Activated CD4-positive, alpha-beta memory T cell treated with anti-CD3 and anti-CD28 coated beads for 36 hours (primary cell): ENCODE measurements at regions of chr13 and their contacts with region 1.

Region 1: DNA sequence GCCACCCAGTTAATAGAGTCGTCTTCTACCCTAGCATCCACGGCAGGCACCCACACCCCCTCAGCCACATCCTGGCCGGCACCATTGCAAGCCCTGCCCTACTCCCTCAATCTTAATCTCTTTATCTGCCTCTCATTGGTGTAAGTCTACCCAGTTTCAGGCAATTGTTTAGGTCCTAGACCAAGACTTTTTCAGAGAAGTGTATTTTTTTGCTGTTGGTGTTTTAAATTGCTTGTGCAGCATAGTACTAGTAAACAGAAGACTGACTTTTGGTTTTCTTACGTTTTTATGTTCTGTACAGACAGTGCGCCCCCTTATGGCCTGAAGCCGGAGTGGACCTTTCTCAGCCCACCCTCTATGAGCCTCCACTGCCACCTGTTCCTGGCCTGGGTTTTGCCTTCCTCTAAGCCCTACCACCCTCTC is 2.3 kb upstream of the LCP1 start:
- DNase-seq: peak; percentile 87
- H3K4me3 Mint-ChIP-seq: peak overlapping the region; percentile 97
- H3K27ac Mint-ChIP-seq: peak overlapping the region; percentile 96
- H3K4me1 Mint-ChIP-seq: peaks cover 35% of the 10 kb centered on the region
- H3K27me3 Mint-ChIP-seq: no peaks in the 10 kb centered on the region

Region 2: DNA sequence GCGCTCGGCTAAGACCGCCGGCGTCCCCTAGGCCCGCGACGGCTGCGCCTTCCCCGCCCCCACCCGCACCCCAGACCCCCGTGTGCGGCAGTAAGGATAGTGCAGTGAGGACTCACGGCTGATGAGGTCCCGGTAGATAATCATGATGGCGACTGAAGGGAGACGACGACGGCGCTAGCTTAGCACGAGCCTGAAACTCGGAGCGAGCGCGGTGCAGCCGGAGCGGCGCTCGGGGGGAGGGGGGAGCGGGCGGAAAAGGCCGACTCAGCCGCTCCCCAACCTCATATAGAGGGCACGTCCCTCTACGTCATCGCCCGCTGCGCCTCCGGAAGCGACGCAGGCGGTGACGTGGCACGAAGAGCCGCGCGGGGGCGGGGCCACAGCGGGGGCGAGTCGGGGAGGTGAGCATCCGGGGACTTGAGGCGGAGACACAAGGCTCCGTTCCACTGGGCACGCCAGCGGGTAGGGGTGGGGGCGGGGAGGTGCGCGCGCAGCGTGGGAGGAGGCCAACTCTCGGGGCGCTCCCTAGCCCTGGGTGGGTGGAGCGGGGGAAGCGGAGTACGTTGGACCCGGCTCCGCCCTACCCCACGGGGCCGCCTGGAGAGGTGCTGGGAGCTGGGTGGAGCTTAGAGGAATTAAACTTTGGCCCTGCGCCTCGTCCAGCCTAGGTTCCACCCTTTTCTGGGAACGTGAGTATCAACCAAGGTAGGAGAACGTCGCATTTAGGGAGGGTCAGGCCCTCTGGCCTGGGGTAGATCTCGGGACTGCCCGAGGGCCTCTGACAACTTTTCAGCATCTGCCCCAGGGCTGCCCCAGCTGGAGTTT is 843.1 kb before region 1 on chr13 and contains the start of gene TPT1:
- CTCF ChIA-PET with region 1: no interaction called
- POLR2A ChIA-PET with region 1: no interaction called
- intact Hi-C with region 1: loop called (anchors 5 kb)
- DNase-seq: peak; percentile 100
- H3K4me3 Mint-ChIP-seq: peak within 1 kb of the TSS; percentile 94
- H3K27ac Mint-ChIP-seq: peak within 1 kb of the TSS; percentile 99
- H3K4me1 Mint-ChIP-seq: peaks cover 45% of the 10 kb centered on the region
- H3K27me3 Mint-ChIP-seq: no peaks in the 10 kb centered on the region
- total RNA-seq, gene TPT1: 3,227 to 3,264 TPM

Region 3: DNA sequence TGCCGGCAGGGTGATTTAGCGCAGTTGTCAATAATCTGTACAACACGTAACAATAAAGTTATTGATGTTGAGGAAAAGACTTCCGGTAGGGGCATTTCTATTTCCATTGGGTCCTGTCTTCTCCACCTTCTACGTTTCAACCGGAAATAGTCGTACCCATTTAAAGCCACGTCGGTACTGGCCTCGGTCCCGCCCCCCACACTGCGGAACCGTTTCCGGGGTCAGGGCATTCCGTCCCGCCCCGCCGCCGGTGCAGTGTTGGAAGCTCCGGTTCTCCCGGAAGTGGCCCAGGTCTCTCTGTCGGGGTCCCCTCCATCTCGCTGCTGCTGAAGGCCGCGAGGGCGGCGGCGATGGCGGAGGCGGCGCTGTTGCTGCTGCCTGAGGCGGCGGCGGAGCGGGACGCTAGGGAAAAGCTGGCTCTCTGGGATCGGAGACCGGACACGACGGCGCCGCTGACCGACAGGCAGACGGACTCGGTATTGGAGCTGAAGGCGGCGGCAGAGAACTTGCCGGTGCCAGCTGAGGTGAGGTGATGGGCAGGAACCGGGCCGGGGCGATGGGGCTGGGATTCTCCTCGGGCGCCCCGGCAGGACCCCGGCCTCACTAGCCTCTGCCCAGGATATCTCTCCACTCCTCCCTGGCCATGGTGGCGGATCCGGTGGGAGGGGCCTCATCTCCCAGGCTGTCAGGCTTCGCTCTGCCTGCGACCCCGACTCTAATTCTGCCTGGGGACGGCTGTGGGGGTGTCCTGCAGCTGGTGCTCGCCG is 719.4 kb before region 1 on chr13 and contains the start of gene COG3:
- CTCF ChIA-PET with region 1: no interaction called
- POLR2A ChIA-PET with region 1: no interaction called
- intact Hi-C with region 1: loop called (anchors 5 kb)
- DNase-seq: peak; percentile 97
- H3K4me3 Mint-ChIP-seq: peak within 1 kb of the TSS; percentile 85
- H3K27ac Mint-ChIP-seq: peak within 1 kb of the TSS; percentile 94
- H3K4me1 Mint-ChIP-seq: peaks cover 47% of the 10 kb centered on the region
- H3K27me3 Mint-ChIP-seq: no peaks in the 10 kb centered on the region
- total RNA-seq, gene COG3: 19.5 to 20.5 TPM

Region 4: GRCh38 chr13:46160471-46161066 is 23.7 kb before region 1 on chr13:
- CTCF ChIA-PET with region 1: interaction called, 164 read pairs
- POLR2A ChIA-PET with region 1: interaction called, 239 read pairs
- intact Hi-C with region 1: loop called (anchors 1 kb)
- DNase-seq: no peak
- H3K4me3 Mint-ChIP-seq: peak overlapping the region; percentile 53
- H3K27ac Mint-ChIP-seq: peak overlapping the region; percentile 79
- H3K4me1 Mint-ChIP-seq: peaks cover 60% of the 10 kb centered on the region
- H3K27me3 Mint-ChIP-seq: no peaks in the 10 kb centered on the region

Region 5: DNA sequence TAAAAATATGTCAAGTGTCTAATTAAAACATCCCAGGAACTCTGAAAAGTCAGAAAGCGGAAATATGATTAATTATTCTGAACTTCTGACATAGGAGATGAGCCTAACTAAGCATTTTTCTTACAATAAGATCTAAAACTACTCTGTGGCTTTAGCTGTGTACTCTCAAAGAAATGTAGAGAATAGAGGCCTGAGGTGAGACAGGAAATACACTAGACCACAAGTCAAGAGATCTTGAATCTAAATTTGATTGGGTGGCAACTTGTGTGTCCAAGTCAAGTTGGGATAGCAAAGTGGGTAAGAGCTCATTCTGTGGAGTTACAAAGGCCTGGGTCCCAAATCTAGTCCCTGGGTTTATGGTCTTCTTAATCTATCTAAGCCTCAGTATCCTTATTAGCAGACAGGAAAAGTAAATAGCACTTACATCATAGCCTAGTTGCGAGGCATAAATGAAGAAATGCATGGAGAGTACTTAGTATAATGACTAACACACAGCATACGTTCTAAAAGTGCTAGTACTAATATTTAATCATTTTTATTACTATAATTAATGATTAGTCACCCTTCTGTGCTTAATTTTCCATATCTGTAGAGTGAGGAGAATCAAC is 18.0 kb after region 1 on chr13:
- CTCF ChIA-PET with region 1: interaction called, 5 read pairs
- POLR2A ChIA-PET with region 1: interaction called, 4 read pairs
- intact Hi-C with region 1: loop called (anchors 1 kb)
- DNase-seq: no peak
- H3K4me3 Mint-ChIP-seq: no peak overlapping the region
- H3K27ac Mint-ChIP-seq: peak overlapping the region; percentile 81
- H3K4me1 Mint-ChIP-seq: peaks cover 32% of the 10 kb centered on the region
- H3K27me3 Mint-ChIP-seq: no peaks in the 10 kb centered on the region

Region 6: GRCh38 chr13:46295491-46296114 is 111.3 kb after region 1 on chr13:
- CTCF ChIA-PET with region 1: interaction called, 3 read pairs
- POLR2A ChIA-PET with region 1: interaction called, 4 read pairs
- intact Hi-C with region 1: loop called (anchors 1 kb)
- DNase-seq: peak; percentile 78
- H3K4me3 Mint-ChIP-seq: peak overlapping the region; percentile 61
- H3K27ac Mint-ChIP-seq: peak overlapping the region; percentile 93
- H3K4me1 Mint-ChIP-seq: peaks cover 53% of the 10 kb centered on the region
- H3K27me3 Mint-ChIP-seq: no peaks in the 10 kb centered on the region